Posterior cingulate gyrus (tissue), 11 donors: ENCODE measurements at regions of chrX and their contacts with region 1.

Region 1: DNA sequence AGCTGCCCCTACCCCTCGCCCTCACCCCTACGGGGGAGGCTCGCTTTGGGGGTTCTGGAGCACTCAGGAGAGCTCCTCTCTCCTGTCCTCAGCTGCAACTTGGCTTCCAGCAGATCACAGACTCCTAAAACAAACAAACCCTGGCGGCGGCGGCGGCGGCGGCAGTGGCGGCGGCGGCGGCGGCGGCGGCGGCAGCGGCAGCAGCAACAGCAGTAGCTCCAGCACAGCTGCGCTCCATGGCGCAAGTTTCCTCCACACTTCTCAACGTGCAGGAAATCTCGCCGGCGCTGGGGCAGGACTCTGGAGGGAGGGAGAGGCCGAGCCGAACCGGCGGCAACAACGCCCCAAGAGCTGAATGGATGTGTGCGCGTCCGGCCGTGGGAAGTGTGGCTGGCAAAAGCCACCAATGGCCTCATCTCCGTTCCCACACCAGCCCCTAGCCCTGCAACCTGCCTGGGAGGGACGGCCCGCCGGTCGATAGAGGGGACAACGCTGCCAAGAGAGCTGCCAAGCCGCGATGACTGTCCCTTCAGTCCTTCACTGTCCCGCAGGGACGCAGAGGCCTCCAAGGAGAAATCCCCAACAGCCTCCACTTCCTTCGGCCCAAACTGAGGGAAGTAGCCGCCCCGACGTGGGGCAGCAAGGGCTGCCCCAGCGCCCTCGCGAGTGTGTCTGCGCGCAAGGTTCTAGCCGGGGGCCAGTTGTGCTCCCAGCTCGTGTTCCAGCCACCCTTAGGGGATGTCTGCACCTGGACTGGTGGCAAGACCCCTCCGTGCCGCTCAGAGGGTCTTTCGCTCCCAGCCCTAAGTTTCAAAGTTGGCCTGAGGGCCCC is 783 bp downstream of the SHROOM4 start:
- DNase-seq: peak in 7 of 10 donors; percentile 4 to 85 (median 20)

Region 2: GRCh38 chrX:50747471-50747900 is 65.7 kb before region 1 on chrX:
- intact Hi-C with region 1: no loop called
- DNase-seq: peak in 2 of 10 donors; percentile 21 to 32

Region 3: GRCh38 chrX:50769389-50770063 is 43.7 kb before region 1 on chrX:
- intact Hi-C with region 1: loop called (anchors 10 kb)
- DNase-seq: peak in 8 of 10 donors; percentile 11 to 84 (median 35)